ENCODE measurements at regions of chr7 and their contacts with region 1.

Region 1: DNA sequence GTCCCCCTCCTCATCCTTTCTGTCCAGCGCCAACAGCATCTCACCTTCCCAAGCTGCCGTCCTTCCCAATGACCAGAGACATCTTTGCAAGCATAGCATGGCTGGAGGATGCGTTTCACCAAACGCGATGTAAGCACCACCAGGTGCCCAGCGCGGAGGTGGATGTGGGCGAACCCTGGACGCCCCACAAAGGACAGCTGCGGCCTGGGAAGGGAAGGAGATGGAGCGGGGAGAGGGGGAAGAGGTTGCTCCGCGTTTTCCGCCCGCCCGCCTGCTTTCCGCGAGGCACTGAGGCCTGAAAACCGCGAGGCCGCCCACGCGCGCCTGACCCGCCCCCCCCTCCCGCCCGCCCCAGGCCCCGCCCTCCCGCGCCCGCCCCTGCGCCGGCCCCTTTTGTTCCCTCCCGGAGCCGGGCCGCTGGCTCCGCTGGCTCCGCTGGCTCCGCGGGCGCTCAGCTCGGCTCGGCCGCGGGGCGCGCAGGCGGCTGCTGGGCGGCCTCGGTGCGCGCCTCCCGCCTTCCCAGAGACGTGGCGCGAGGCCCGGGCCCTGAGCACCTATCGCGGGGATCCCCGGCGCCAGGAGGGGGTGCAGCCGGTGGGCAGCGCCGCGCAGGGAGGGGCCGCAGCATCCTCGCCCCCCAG is at the start of gene CLIP2:
- DNase-seq: peak; percentile 85 to 87
- ATAC-seq: peak; percentile 87 to 91 (median 90)
- H3K4me3 ChIP-seq: peak within 1 kb of the TSS; percentile 70
- H3K27ac ChIP-seq: no peak within 1 kb of the TSS
- H3K4me1 ChIP-seq: peaks cover 4% of the 10 kb centered on the region
- H3K27me3 ChIP-seq: peaks cover 0 to 4% (median 2%) of the 10 kb centered on the region in 3 donors
- CTCF ChIP-seq: no peak
- total RNA-seq, gene CLIP2: 2.2 to 4.3 (median 3.3) TPM

Region 2: DNA sequence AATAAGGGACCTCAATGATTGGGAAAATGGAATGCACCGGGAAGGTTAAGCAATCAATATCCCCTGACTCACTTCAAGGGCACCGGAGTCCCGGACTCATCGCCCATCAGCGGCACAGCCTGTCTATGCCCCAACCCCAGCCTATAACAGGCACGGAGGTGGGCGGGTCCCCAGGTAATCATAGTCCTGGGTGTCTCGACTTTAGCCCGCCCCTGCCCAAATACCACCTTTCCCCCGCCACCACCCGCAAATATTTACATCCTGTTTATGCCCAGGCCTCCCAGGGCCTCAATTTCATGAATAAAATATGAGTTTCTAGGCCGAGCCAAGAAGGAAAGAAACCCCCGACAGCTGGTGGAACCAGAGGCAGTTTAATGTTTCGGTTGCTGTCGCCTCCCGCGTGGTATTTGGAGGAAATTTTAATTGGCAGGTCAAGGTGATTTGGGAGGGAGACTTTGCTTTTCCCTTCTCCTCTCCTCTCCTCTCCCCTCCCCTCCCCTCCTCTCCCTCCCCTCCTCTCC is 19.3 kb before region 1 on chr7:
- intact Hi-C with region 1: loop called in 1 of 2 experiments (anchors 2 kb)
- DNase-seq: peak in 1 of 2 donors; percentile 66
- ATAC-seq: peak in 3 of 4 donors; percentile 41 to 69 (median 47)
- H3K4me3 ChIP-seq: peak overlapping the region; percentile 71
- H3K27ac ChIP-seq: no peak overlapping the region
- H3K4me1 ChIP-seq: peaks cover 3% of the 10 kb centered on the region
- H3K27me3 ChIP-seq: no peaks in the 10 kb centered on the region
- CTCF ChIP-seq: no peak